ENCODE measurements at regions of chr13 and their contacts with region 1.

Region 1: DNA sequence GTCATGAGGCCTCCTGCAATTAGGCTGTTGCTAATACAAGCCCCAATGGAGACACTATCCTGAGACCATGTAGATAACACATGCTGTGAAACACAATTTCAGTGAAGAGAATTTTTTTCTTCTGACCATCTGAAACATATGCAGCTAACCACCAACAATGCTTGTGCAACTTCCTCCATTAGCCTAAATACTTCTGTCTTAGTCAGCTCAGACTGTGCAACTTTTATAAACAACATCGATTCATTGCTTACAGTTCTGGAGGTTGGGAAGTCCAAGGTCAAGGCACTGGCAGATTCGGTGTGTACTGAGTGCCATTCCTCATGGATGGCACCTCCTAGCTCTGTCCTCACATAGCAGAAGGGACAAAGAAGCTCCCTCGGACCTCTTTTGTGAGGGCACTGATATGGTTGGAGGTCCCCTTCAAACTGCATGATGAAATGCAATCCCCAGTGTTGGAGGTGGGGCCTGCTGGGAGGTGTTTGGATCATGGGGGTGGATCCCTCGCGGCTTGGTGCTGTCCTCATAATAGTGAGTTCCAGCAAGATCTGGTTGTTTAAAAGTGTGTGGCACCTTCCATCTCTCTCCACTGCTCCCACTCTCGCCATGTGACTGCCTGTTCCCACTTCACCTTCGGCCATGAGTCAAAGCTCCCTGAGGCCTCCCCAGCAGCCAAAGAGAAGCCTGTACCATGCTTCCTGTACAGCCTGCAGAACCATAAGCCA is 27.7 kb downstream of the STK24 start:
- DNase-seq: peak; percentile 98
- ATAC-seq: peak; percentile 95
- H3K4me3 ChIP-seq: no peak overlapping the region
- H3K27ac ChIP-seq: peak overlapping the region; percentile 75
- H3K4me1 ChIP-seq: peaks cover 23% of the 10 kb centered on the region
- H3K27me3 ChIP-seq: no peaks in the 10 kb centered on the region
- CTCF ChIP-seq: no peak
- POLR2A ChIP-seq: no peak
- RAD21 ChIP-seq: no peak

Region 2: DNA sequence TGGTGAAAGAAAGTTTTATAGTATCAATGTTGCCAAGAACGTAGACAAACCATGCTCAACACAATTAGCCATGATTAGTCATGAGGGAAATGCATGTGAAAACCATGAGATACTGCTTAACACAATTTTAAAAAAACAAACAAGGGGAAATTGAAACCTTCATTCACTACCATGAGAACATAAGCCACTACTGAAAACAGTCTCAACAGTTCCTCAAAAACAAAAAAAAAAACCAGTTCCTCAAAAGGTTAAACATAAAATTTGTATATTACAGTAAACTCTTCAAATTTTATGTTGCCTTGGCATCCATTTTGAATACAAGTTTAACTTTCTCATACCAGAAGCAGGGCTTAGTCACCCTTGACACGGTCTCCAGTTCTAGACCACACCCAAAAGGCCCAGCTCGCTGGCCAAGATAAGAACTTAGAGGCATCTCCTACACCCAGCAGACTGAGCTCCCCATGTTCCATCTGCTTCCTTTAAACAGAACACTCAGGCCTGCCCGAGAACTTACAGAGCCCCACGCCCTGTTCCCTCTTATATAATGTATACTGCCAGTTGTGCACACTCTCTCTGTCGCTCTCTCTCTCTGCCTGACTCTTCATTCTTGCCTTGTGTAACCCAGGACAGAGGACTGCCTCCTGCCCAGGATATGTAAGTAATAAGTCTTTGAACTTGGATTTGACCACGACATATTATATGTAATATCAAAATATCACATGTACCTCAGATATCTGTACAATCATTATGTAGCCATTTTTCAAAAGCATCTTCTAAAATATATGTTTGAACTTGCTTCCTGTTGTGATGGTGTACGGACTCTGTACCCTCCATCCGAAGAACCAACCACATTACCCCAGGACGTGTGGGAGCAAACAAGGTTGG is 39.7 kb before region 1 on chr13:
- CTCF ChIA-PET with region 1: no interaction called
- POLR2A ChIA-PET with region 1: interaction called, 3 read pairs
- dilution Hi-C with region 1: no loop called
- in situ Hi-C with region 1: no loop called
- intact Hi-C with region 1: loop called (anchors 2 kb)
- DNase-seq: peak; percentile 92
- ATAC-seq: peak; percentile 84
- H3K4me3 ChIP-seq: no peak overlapping the region
- H3K27ac ChIP-seq: peak overlapping the region; percentile 82
- H3K4me1 ChIP-seq: peaks cover 27% of the 10 kb centered on the region
- H3K27me3 ChIP-seq: no peaks in the 10 kb centered on the region
- CTCF ChIP-seq: no peak
- POLR2A ChIP-seq: peak; percentile 54; the same call in 1 of the 2 replicates
- RAD21 ChIP-seq: no peak